ENCODE measurements at regions of chr4 and their contacts with region 1.

Region 1: DNA sequence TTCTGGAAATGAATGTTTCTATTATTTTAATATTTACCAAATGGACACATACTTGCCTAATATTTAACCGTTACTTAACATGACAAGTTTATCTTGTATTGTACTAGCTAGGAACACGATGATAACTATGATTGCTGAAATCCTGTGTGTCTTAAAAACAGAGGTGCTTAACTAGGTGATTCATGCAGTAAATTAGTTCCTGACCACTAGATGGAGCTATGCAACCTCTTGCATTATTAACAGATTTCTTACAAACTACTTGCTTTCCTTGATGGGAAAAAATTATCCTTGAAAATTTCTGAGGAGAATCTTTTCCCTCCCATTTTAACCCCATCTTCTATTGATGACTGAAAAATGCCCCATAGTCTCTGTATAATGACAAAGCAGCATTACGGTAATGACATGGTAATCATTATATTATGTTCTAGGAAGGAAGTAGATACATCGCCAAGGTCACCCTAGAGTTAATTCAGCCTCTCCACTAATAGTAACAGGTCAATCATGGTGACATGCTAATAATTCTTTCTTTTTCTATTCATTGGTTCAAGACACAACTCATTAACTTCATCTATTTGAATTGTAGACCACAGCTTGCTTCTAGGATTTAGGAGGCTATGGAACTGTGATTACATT is 844.2 kb downstream of the RAPGEF2 start:
- DNase-seq: no peak
- H3K4me3 Mint-ChIP-seq: no peak overlapping the region
- H3K27ac Mint-ChIP-seq: no peak overlapping the region
- H3K4me1 Mint-ChIP-seq: no peaks in the 10 kb centered on the region
- H3K27me3 Mint-ChIP-seq: no peaks in the 10 kb centered on the region

Region 2: GRCh38 chr4:158682066-158682465 is 1265.0 kb before region 1 on chr4:
- intact Hi-C with region 1: no loop called
- DNase-seq: no peak
- H3K4me3 Mint-ChIP-seq: no peak overlapping the region
- H3K27ac Mint-ChIP-seq: no peak overlapping the region
- H3K4me1 Mint-ChIP-seq: no peaks in the 10 kb centered on the region
- H3K27me3 Mint-ChIP-seq: no peaks in the 10 kb centered on the region

Region 3: GRCh38 chr4:159390648-159391047 is 556.5 kb before region 1 on chr4:
- intact Hi-C with region 1: no loop called
- DNase-seq: no peak
- H3K4me3 Mint-ChIP-seq: no peak overlapping the region
- H3K27ac Mint-ChIP-seq: no peak overlapping the region
- H3K4me1 Mint-ChIP-seq: no peaks in the 10 kb centered on the region
- H3K27me3 Mint-ChIP-seq: peaks cover 1% of the 10 kb centered on the region

Region 4: DNA sequence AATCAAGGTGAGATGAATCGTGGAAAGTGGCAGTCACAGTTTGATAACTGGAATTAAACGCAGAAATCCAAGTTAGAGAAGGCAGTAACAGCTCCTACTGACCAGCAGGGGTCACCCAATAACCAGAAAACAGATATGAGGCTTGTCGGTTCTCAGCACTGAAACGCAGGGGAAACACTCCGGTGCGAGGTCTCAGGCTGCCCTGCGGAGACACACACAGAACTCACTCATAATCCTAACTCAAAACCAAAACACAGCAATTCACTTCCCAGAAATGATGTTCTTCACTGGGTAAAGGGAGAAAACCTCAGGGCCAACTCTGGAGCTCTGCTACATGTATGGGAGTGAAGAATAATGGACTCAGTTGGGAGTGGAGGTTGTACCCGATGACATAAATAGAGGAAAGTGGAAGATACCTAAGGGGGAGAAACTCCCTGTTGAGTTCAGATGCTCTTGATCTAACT is 459.8 kb before region 1 on chr4:
- intact Hi-C with region 1: loop called (anchors 10 kb)
- DNase-seq: peak; percentile 9
- H3K4me3 Mint-ChIP-seq: no peak overlapping the region
- H3K27ac Mint-ChIP-seq: no peak overlapping the region
- H3K4me1 Mint-ChIP-seq: no peaks in the 10 kb centered on the region
- H3K27me3 Mint-ChIP-seq: peaks cover 3% of the 10 kb centered on the region

Region 5: DNA sequence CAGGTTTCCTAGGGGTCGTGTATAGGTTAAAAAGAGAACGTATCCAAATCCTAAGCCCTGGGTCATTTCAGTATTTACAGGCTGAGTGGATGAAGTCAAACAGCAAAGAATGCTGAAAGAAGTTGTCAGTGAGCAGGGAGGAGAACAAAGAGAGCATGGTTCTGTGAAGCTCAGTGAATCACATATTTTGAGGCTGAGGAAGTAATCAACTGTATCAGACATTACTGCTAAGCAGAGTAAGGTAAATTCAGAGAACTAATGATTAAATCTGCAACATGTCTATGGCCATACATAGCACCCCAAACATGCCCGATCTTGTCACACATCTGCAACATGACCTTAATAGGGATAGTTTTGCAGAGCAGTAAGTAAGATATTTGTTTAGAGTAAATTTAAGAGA is 286.0 kb after region 1 on chr4:
- intact Hi-C with region 1: no loop called
- DNase-seq: no peak
- H3K4me3 Mint-ChIP-seq: no peak overlapping the region
- H3K27ac Mint-ChIP-seq: no peak overlapping the region
- H3K4me1 Mint-ChIP-seq: no peaks in the 10 kb centered on the region
- H3K27me3 Mint-ChIP-seq: no peaks in the 10 kb centered on the region